Activated T-helper 1 cell treated with anti-CD3 and anti-CD28 coated beads, Interleukin-12 subunit alpha, Interleukin-12 subunit beta, Interleukin-2, Interleukin-4 antibody, amounts not matched to agents 30 ng/mL and 10 ng/mL and 1 ng/mL, durations not matched to agents 14 hours and 24 hours and 36 hours (primary cell): ENCODE measurements at regions of chr2 and their contacts with region 1.

Region 1: DNA sequence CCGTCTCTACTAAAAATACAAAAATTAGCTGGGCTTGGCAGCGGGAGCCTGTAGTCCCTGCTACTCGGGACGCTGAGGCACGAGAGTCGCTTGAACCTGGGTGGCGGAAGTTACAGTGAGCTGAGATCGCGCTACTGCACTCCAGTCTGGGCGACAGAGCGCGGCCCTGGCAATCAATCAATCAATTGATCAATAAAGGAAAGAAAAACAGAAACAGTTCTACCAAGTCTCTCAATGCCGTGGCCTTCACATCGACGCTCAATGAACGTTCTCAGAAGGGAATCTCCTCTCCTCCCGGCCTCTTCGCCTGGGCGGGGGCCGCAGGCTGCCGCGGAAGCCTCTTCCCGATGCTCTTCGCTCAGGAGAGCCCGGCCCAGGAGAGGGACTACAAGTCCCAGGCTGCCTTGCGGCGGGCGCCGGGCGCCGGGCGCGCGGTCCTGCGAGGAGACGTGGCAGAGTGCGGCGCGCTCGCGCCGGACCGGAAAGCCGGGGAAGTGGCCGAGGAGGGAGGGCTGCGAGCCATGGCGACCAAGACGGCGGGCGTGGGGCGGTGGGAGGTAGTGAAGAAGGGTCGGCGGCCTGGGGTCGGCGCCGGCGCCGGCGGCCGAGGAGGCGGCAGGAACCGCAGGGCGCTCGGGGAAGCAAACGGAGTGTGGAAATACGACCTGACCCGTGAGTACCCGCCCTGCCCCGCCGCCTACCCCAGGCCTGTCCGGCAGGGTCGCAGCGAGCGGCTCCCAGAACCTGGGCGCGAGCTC is at the start of gene TMEM214:
- DNase-seq: peak; percentile 83
- H3K4me3 Mint-ChIP-seq: peak within 1 kb of the TSS; percentile 96
- H3K27ac Mint-ChIP-seq: peak within 1 kb of the TSS; percentile 90
- H3K4me1 Mint-ChIP-seq: peaks cover 46% of the 10 kb centered on the region
- H3K27me3 Mint-ChIP-seq: no peaks in the 10 kb centered on the region
- total RNA-seq, gene TMEM214: 97.5 and 98.1 TPM in 2 replicates

Region 2: DNA sequence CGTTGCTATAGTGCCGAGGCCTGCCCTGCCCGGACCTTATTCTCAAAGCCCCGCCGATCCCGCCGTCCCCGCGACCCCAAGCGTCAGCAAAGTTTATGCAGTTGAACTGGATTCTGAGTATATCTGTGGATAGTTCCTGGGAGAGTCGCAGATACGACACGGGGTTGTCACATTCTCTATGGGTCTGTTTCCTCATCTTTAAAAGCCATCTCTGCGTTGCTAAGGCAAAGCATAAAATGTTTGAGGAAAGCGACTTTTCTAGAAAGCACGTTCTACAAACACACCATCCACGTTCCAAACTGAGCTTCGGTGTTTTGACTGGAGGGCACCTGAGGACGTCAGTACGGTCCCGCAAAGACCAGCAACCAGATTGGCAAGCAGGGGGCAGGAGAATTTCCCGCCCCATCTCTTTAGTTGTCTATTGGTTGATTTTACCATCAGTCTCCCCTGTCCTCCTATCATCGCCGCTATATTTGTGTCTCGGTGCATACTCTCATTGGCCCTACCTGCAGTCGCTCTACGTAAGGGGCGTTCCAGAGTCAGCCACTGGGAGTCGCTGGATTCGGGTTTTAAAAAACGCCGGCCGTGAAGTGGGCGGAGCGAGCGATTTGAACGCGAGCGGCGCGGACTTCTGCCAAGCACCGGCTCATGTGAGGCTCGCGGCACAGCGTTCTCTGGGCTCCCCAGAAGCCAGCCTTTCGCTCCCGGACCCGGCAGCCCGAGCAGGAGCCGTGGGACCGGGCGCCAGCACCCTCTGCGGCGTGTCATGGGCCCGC is 247.1 kb before region 1 on chr2 and contains the start of gene CENPA:
- intact Hi-C with region 1: loop called (anchors 5 kb)
- DNase-seq: peak; percentile 94
- H3K4me3 Mint-ChIP-seq: peak within 1 kb of the TSS; percentile 96
- H3K27ac Mint-ChIP-seq: peak within 1 kb of the TSS; percentile 89
- H3K4me1 Mint-ChIP-seq: peaks cover 33% of the 10 kb centered on the region
- H3K27me3 Mint-ChIP-seq: no peaks in the 10 kb centered on the region
- total RNA-seq, gene CENPA: 16.6 and 19.7 TPM in 2 replicates

Region 3: GRCh38 chr2:26970244-26970920 is 62.3 kb before region 1 on chr2 and contains the start of gene MAPRE3:
- intact Hi-C with region 1: loop called (anchors 1 kb)
- DNase-seq: peak; percentile 78
- H3K4me3 Mint-ChIP-seq: peak within 1 kb of the TSS; percentile 84
- H3K27ac Mint-ChIP-seq: peak within 1 kb of the TSS; percentile 71
- H3K4me1 Mint-ChIP-seq: peaks cover 17% of the 10 kb centered on the region
- H3K27me3 Mint-ChIP-seq: peaks cover 49% of the 10 kb centered on the region
- total RNA-seq, gene MAPRE3: 3.1 and 3.7 TPM in 2 replicates

Region 4: DNA sequence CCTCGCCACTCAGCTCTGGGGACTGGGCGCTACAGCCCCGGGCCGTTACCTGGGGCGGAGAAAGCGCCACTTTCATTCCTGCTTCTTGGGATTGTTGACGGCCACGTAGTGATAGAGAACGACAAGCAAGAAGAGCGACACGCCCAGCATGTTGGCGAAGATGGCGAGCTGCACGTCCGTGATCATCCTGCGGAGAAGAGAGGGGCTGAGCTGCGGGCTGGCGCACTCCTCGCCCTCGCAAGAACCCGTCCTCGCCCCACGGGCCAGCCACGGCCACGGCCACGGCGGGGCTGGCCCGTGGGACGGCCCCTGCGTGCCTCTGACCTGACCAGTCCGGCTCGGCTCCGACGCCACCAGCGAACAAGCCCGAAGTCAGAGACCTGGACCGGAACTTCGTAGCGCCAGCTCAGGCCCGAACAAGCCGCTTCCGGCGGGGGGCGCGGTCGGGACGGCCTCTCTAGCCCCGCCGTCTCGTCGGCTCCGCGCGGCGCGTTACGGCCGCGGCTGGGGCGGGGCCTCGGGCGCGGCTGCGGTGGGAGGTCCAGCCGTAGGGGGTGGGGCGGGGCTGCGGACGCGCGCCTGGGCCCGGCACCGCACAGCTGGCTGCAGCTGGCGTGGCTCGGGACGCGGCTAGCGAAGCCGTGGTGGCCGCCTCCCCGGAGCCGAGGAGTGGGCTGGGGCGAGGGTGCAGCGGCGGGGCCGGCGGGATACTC is 38.8 kb after region 1 on chr2 and contains the start of gene OST4:
- intact Hi-C with region 1: loop called (anchors 1 kb)
- DNase-seq: peak; percentile 91
- H3K4me3 Mint-ChIP-seq: peak within 1 kb of the TSS; percentile 99
- H3K27ac Mint-ChIP-seq: peak within 1 kb of the TSS; percentile 98
- H3K4me1 Mint-ChIP-seq: peaks cover 84% of the 10 kb centered on the region
- H3K27me3 Mint-ChIP-seq: peaks cover 2% of the 10 kb centered on the region
- total RNA-seq, gene OST4: 322 and 332 TPM in 2 replicates